ENCODE measurements at regions of chr2 and their contacts with region 1.

Region 1: GRCh38 chr2:119702918-119703401 is 24.0 kb downstream of the TMEM177 start:
- DNase-seq: peak; percentile 85
- ATAC-seq: peak; percentile 62
- H3K4me3 Mint-ChIP-seq: no peak overlapping the region
- H3K27ac Mint-ChIP-seq: no peak overlapping the region
- H3K4me1 Mint-ChIP-seq: peaks cover 52% of the 10 kb centered on the region
- H3K27me3 Mint-ChIP-seq: no peaks in the 10 kb centered on the region
- CTCF ChIP-seq: peak; percentile 95

Region 2: DNA sequence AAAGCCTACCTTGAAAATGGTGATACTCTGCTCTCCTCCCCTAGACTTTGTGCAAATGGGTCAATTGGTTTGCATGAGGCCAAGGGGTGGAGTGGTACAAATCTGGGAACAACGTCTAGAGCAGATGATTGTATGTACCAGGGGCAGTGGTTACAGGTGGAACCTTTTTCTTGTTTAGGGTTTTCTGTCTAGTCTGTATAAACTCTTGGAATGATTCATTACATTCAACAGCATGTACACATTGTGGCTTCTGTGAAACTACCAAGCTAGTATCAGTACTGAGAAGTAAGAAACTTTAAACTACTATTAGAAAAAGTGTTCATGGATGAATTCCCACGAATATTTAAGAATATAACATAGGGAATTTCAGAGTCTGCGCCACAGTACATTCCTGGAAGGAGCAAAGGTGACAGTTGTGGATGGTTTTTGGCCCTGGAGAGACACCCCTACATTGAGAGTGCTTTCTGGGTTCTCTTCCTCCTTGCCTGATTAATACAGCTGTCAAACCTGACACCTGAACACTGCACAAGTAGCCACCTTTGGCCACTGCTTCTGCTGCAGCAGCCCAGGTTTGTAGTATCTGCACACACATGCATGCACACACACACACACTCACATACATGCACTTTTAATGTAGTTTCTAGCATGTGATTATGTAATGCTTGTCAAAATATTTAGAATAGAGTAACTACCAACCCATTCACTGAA is 128.7 kb before region 1 on chr2:
- CTCF ChIA-PET with region 1: no interaction called
- POLR2A ChIA-PET with region 1: no interaction called
- DNase-seq: no peak
- ATAC-seq: no peak
- H3K4me3 Mint-ChIP-seq: no peak overlapping the region
- H3K27ac Mint-ChIP-seq: no peak overlapping the region
- H3K4me1 Mint-ChIP-seq: no peaks in the 10 kb centered on the region
- H3K27me3 Mint-ChIP-seq: peaks cover 34% of the 10 kb centered on the region
- CTCF ChIP-seq: no peak

Region 3: DNA sequence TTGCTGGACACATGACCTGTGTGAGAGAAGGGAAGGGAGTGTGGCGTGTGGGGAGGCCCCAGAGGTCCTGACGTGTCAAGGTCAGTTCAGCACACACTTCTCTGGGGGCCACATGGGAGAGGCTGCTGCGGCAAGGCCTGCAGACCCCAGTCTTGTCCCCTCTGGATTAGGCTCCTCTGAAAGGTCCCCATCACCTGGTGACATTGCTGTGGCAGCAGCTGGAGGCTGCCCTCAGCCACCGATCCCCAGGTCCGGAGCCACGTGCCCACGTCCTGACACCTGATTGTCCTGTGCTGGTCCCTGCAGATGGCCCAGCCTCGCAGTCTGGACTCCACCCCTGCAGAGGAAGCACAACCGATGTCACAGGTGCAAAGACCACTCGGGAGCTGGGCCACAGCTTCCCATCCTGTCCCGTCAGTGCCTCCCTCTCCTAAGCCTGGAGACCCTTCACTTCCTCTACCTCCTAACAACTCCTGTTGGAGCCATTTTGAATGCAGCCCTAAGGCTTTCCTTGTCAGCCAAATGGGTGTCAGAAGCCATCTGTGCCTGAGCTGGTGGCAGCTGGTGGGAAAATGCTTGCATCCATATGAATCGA is 11.2 kb before region 1 on chr2:
- CTCF ChIA-PET with region 1: interaction called, 14 read pairs
- POLR2A ChIA-PET with region 1: no interaction called
- DNase-seq: no peak
- ATAC-seq: no peak
- H3K4me3 Mint-ChIP-seq: no peak overlapping the region
- H3K27ac Mint-ChIP-seq: no peak overlapping the region; the same call in 1 of the 2 replicates
- H3K4me1 Mint-ChIP-seq: peaks cover 22% of the 10 kb centered on the region
- H3K27me3 Mint-ChIP-seq: no peaks in the 10 kb centered on the region; the same call in 1 of the 2 replicates
- CTCF ChIP-seq: no peak

Region 4: GRCh38 chr2:119721462-119721861 is 18.5 kb after region 1 on chr2:
- CTCF ChIA-PET with region 1: interaction called, 20 read pairs
- POLR2A ChIA-PET with region 1: no interaction called
- DNase-seq: no peak
- ATAC-seq: peak; percentile 55
- H3K4me3 Mint-ChIP-seq: no peak overlapping the region
- H3K27ac Mint-ChIP-seq: no peak overlapping the region
- H3K4me1 Mint-ChIP-seq: peaks cover 8% of the 10 kb centered on the region
- H3K27me3 Mint-ChIP-seq: no peaks in the 10 kb centered on the region
- CTCF ChIP-seq: no peak

Region 5: DNA sequence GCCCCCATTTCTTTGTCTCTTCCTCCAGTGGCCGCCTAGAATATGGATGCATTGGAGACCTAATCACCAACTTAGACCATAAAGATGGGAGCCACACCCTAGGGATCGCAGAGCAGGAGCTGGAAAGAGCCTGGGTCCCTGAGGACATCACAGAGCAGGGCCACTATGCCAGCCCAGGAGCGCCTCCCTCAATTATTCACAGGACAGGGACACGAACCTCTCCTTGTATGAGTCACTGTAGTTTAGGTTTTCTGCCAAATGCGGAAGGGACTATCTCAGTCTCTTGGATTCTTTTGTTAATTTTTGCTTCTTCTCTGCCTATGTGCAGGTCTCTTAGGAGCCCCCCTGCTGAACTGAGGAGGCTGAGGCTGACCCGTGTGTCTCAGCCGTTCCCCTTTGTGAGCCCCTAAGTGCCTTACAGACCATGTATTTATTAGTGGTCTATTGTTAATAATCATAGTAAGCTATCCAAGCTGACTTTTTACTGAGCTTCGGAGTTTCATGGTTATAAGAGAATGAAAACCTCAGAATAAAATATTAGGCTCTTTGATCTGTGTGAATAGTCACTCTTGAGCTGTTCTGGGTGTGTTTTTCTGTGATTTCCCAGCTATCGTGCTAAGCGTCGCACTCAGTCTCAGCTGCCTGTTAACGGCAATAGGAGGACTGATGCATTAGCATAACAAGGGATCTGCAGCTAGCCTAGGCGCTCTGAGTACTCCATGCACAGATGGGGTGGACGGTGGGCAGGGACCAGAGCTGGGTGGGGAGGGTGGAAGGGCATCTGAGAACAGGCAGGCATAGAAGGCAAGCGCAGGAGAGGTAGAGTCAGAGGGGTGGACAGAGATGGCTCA is 44.1 kb after region 1 on chr2:
- CTCF ChIA-PET with region 1: interaction called, 19 read pairs
- POLR2A ChIA-PET with region 1: no interaction called
- DNase-seq: no peak
- ATAC-seq: peak; percentile 78
- H3K4me3 Mint-ChIP-seq: no peak overlapping the region
- H3K27ac Mint-ChIP-seq: no peak overlapping the region
- H3K4me1 Mint-ChIP-seq: peaks cover 17% of the 10 kb centered on the region
- H3K27me3 Mint-ChIP-seq: no peaks in the 10 kb centered on the region; the same call in 1 of the 2 replicates
- CTCF ChIP-seq: no peak

Region 6: GRCh38 chr2:119823734-119824334 is 120.9 kb after region 1 on chr2:
- CTCF ChIA-PET with region 1: interaction called, 10 read pairs
- POLR2A ChIA-PET with region 1: no interaction called
- DNase-seq: peak; percentile 26
- ATAC-seq: peak; percentile 71
- H3K4me3 Mint-ChIP-seq: no peak overlapping the region
- H3K27ac Mint-ChIP-seq: peak overlapping the region; percentile 81
- H3K4me1 Mint-ChIP-seq: peaks cover 36% of the 10 kb centered on the region
- H3K27me3 Mint-ChIP-seq: no peaks in the 10 kb centered on the region
- CTCF ChIP-seq: no peak; the same call in 1 of the 2 replicates

Region 7: GRCh38 chr2:120174963-120175581 is 472.1 kb after region 1 on chr2:
- CTCF ChIA-PET with region 1: interaction called, 32 read pairs
- POLR2A ChIA-PET with region 1: no interaction called
- DNase-seq: no peak
- ATAC-seq: peak; percentile 25; the same call in 1 of the 2 replicates
- H3K4me3 Mint-ChIP-seq: no peak overlapping the region
- H3K27ac Mint-ChIP-seq: no peak overlapping the region
- H3K4me1 Mint-ChIP-seq: peaks cover 28% of the 10 kb centered on the region
- H3K27me3 Mint-ChIP-seq: no peaks in the 10 kb centered on the region
- CTCF ChIP-seq: peak; percentile 74